ENCODE measurements at regions of chr2 and their contacts with region 1.

Region 1: DNA sequence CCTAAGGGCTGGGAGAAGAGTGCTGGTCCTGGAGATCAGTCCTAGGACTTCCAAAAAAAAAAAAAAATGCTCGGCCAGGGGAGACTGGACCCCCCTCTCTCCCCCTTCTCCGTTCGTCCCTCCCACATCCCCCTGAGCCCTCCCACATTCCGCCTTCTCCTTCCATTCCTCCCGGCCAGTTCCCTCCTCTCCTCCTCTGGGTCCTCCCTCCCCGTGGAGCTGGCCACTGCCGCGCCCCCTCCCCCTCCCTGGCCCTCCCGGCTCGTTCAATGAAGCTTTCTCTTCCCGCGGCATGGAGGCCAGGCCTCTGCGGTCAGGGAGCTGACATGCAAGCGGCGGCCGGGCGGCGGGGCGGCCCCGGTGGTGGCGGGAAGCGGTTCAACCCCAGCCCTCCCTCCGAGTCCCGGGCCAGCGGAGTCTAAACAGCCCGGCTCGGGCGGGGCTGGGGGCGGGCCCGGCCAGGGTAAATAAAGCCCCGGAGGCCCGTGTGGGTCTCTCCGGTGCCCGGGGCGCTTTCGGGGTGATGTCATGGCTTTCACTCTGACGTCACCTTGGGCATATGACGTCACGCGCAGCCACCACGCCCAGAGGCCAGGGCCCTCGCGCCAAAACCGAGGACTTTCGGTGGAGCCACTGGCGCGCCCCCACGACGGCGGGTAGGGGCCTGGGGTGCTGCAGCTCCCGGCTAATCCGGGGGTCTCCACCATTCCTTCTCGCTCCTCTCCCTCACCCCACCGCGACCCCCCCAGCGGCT is at the start of gene LOXL3:
- DNase-seq: peak; percentile 65
- H3K4me3 ChIP-seq: peak within 1 kb of the TSS; percentile 92
- CTCF ChIP-seq: no peak

Region 2: GRCh38 chr2:74566754-74567085 is 12.7 kb after region 1 on chr2:
- CTCF ChIA-PET with region 1: interaction called, 6 read pairs
- POLR2A ChIA-PET with region 1: interaction called, 12 read pairs
- DNase-seq: peak; percentile 97
- H3K4me3 ChIP-seq: no peak overlapping the region
- CTCF ChIP-seq: no peak

Measured in AG04449 (cell line).